Common myeloid progenitor, CD34-positive (primary cell): ENCODE measurements at regions of chr3 and their contacts with region 1.

Region 1: GRCh38 chr3:115808244-115808643 is 184.9 kb downstream of the GAP43 start:
- DNase-seq: no peak
- H3K4me3 ChIP-seq: no peak overlapping the region
- H3K27ac ChIP-seq: no peak overlapping the region
- H3K4me1 ChIP-seq: no peaks in the 10 kb centered on the region
- H3K27me3 ChIP-seq: peaks cover 2 to 7% (median 7%) of the 10 kb centered on the region in 5 experiments

Region 2: DNA sequence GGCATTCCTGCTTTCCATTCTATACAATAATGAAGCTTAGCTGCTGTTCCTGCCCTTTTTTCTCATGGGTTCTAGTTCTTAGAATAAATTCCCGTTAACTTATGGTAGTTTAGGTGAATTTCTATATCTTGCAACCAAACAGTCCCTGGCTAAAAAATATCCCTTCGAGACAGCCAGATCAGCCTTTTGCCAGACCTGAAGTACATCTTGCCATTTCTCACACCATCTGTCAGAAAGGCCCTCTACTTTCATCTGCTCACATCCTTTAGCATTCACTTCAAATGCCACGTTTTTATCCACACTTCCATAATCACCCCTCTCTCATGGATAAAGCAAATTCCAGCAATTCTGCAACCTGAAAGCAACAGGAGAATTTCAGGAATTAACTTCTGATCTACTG is 39.6 kb before region 1 on chr3:
- CTCF ChIA-PET with region 1: no interaction called
- POLR2A ChIA-PET with region 1: no interaction called
- DNase-seq: no peak
- H3K4me3 ChIP-seq: no peak overlapping the region
- H3K27ac ChIP-seq: no peak overlapping the region
- H3K4me1 ChIP-seq: no peaks in the 10 kb centered on the region
- H3K27me3 ChIP-seq: peaks cover 0 to 2% (median 0%) of the 10 kb centered on the region in 5 experiments

Region 3: GRCh38 chr3:115819785-115820384 is 11.6 kb after region 1 on chr3:
- CTCF ChIA-PET with region 1: interaction called, 10 read pairs
- POLR2A ChIA-PET with region 1: no interaction called
- DNase-seq: peak; percentile 88 to 93 (median 88)
- H3K4me3 ChIP-seq: no peak overlapping the region
- H3K27ac ChIP-seq: no peak overlapping the region
- H3K4me1 ChIP-seq: no peaks in the 10 kb centered on the region
- H3K27me3 ChIP-seq: peaks cover 0 to 1% (median 0%) of the 10 kb centered on the region in 5 experiments